SK-N-SH (cell line): ENCODE measurements at regions of chr17 and their contacts with region 1.

Region 1: GRCh38 chr17:28494445-28495188 is 11.5 kb upstream of the FOXN1 start:
- DNase-seq: peak; percentile 93
- H3K4me3 ChIP-seq: no peak overlapping the region
- H3K27ac ChIP-seq: no peak overlapping the region
- H3K4me1 ChIP-seq: peaks cover 0 to 2% of the 10 kb centered on the region in 2 experiments; a peak in 1 of 4 replicates
- H3K27me3 ChIP-seq: 0 out of 2 replicates have a peak, but pooled peaks cover 7% of the 10 kb centered on the region
- CTCF ChIP-seq: peak; percentile 86
- EP300 ChIP-seq: no peak
- RAD21 ChIP-seq: peak; percentile 93

Region 2: DNA sequence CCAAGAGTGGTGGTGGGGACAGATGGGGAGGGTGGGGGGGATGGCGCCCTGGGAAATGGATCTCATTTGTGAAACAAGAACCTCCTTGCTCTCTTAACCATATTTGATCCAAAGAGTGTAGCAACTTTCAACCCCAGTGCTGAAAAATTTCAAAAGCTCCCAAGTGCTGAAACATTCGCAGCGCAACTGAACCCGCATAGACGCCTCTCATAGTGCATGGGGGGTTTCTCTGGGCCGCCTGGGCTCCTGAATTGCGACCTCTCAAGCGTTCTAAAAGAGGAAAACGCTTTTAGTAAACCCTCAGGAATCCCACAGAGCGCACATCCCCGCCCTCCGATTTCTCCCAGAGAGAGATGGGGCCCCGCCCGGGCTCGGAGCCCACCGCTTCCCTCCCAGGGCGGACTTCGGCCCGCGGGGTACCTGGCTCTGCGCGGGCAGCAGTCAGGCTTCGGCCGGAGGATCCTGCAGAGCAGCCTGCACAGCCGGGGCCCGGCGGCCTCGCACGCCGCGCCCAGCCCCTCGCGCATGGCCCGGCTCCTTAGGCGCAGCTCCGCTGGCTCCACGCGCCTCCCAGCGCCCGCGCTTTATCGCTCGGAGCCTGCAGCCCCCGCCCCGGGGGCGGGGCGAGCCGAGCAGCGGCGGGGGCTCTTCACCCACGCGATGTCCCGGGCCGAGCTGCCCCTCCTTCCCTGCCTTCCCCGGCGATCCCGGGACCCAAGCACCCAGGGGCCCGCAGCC is 701.3 kb before region 1 on chr17:
- CTCF ChIA-PET with region 1: no interaction called
- POLR2A ChIA-PET with region 1: no interaction called
- DNase-seq: peak; percentile 90
- H3K4me3 ChIP-seq: peak overlapping the region; percentile 37 to 43
- H3K27ac ChIP-seq: no peak overlapping the region
- H3K4me1 ChIP-seq: peaks cover 0 to 3% of the 10 kb centered on the region in 2 experiments; a peak in 1 of 4 replicates
- H3K27me3 ChIP-seq: peaks cover 7% of the 10 kb centered on the region
- CTCF ChIP-seq: no peak
- EP300 ChIP-seq: no peak
- RAD21 ChIP-seq: no peak

Region 3: DNA sequence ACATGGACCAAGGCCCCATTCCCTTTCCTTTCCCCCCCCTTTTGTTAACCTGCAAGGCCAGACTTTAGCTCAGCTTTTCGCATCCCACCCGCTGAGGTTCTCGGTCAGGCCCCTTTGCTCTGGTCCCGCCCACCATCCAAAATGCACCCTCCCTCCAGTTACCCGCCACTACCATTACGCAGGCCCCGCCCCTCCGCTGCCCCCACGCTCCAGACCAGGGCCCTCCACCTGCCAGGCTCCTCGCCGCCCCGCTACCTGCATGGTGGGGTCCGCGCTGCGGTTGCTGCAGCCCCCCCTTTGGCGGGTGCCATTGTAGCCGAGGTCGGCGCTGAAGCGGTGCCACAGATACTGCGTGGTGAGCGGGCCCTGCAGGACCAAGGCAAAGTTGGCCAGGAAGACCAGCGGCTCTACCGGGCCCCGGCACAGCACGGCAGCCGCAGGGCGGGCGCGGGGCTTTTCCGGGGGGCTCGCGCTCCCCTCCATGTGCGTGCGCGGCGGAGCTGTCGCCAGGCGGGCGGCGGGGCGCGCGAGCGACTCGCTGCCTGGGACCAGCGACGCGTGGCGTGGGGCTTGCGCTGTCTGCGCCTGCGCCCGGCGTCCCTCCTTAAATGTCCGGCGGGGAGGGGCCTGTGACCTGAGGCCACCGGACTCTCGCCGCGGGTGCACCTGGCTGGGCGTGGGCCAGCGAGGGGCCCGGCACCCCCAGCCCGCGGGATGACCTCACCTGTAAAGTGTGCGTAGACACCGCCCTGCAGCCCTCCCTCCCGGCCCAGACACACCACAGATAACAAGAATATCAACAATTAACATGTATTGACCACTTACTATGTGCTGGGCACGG is 88.8 kb before region 1 on chr17 and contains the start of gene SLC46A1:
- CTCF ChIA-PET with region 1: no interaction called
- POLR2A ChIA-PET with region 1: no interaction called
- DNase-seq: peak; percentile 91
- H3K4me3 ChIP-seq: peak within 1 kb of the TSS; percentile 60 to 88
- H3K27ac ChIP-seq: peak within 1 kb of the TSS; percentile 16 to 56; a peak in 3 of 4 replicates
- H3K4me1 ChIP-seq: peaks cover 10 to 16% of the 10 kb centered on the region in 2 experiments; a peak in 2 of 4 replicates
- H3K27me3 ChIP-seq: no peaks in the 10 kb centered on the region
- CTCF ChIP-seq: no peak
- EP300 ChIP-seq: no peak
- RAD21 ChIP-seq: no peak
- polyA plus RNA-seq, gene SLC46A1: 4.2 and 4.3 TPM in 2 replicates

Region 4: DNA sequence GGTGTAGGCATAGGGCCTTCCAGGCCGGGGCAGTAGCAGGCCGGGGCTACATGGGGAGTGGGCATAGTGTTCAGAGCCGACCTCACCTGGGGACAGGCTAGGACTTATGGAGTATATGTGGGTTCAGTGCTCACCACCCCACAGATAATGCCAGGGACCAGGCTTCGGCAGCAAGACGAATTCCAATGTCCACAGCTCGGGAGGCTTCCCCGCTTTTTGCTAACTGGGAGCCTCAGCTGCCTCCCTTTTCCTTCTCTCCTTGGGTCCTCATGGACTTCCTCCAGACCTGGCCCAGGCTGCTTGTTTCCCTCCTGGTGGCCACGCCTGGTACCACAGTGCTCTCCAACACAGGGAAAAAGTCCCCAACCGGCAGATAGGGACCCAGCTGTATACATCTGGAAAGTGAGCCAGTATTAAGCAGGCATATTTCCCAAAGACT is 68.5 kb before region 1 on chr17:
- CTCF ChIA-PET with region 1: no interaction called
- POLR2A ChIA-PET with region 1: no interaction called
- DNase-seq: peak; percentile 40
- H3K4me3 ChIP-seq: no peak overlapping the region
- H3K27ac ChIP-seq: no peak overlapping the region
- H3K4me1 ChIP-seq: no peaks in the 10 kb centered on the region
- H3K27me3 ChIP-seq: no peaks in the 10 kb centered on the region; the same call in 1 of the 2 replicates
- CTCF ChIP-seq: peak; percentile 42; the same call in 1 of the 2 replicates
- EP300 ChIP-seq: no peak
- RAD21 ChIP-seq: no peak

Region 5: DNA sequence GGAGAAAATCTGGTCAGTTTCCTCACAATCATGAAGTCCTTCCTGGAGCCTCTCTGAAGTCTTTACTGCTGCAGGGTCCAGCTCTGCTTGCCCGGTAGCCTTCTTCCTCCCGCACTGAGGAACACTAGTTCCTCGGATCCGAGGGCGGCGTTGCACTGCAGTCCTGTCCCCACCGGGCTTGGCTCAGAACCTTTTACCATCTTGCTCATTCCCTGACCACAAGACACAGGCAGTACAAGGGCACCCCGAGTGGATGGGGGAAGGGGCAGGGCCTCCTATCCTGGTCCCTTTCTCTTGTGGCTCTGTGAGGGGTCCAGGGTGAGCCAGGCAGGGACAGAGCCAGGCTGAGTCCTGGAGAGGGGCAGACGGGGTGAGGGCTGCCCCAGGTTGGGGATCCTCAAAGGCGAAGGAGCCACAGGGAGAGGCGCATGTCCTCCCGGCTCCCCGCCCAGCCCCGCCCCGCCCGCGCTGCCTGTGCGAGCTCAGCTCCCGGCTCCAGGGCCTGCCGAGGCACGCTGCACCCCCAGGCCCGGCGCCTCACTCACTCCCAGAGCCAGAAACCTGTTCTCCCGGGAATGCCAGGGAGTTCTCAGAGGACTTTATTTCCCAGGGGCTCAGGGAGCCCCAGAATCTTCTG is 13.1 kb after region 1 on chr17:
- CTCF ChIA-PET with region 1: interaction called, 13 read pairs
- POLR2A ChIA-PET with region 1: no interaction called
- DNase-seq: no peak
- H3K4me3 ChIP-seq: no peak overlapping the region
- H3K27ac ChIP-seq: no peak overlapping the region
- H3K4me1 ChIP-seq: no peaks in the 10 kb centered on the region
- H3K27me3 ChIP-seq: peaks cover 26% of the 10 kb centered on the region
- CTCF ChIP-seq: no peak
- EP300 ChIP-seq: no peak
- RAD21 ChIP-seq: no peak

Region 6: DNA sequence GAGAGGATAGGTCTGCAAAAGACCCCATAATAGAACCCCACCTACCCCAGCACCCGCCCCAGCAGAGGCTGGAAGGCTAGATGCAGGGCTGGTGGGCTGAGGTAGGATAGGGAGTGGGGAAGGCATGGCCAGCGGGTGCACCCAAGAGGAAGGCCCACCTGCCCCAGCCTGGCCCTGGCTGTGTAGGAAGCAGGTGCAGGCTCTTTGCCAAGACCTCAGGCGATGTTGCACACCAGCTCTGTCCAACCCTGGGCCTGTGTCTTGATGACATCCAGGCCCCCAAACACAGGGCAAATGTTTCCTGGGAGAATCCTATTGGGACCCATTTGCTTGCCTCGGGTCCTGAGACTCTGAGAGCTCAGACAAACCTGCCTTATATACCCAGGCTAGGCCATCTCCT is 45.6 kb after region 1 on chr17:
- CTCF ChIA-PET with region 1: interaction called, 117 read pairs
- POLR2A ChIA-PET with region 1: no interaction called
- DNase-seq: peak; percentile 21
- H3K4me3 ChIP-seq: no peak overlapping the region
- H3K27ac ChIP-seq: no peak overlapping the region
- H3K4me1 ChIP-seq: no peaks in the 10 kb centered on the region
- H3K27me3 ChIP-seq: no peaks in the 10 kb centered on the region
- CTCF ChIP-seq: no peak
- EP300 ChIP-seq: no peak
- RAD21 ChIP-seq: no peak

Region 7: DNA sequence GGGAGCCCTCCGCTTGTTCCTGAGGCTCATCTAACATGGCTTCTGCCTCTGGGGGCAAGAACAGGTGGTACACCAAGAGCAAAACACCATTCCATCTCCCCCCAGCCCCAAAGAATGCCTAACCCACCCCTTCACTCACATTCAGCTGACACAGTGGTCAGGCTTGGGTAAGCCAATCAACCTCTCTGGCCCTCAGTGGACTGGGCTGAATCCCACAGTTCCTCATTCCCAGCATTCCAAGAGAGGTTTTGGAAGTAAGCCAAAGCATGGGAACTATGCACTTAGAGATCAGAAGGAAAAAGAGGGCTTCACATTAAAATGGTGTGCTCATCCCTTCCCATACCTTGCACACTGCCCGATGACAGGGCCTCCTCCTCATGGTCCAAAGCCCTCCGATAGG is 68.9 kb after region 1 on chr17:
- CTCF ChIA-PET with region 1: no interaction called
- POLR2A ChIA-PET with region 1: no interaction called
- DNase-seq: no peak
- H3K4me3 ChIP-seq: no peak overlapping the region
- H3K27ac ChIP-seq: no peak overlapping the region
- H3K4me1 ChIP-seq: peaks cover 0 to 2% of the 10 kb centered on the region in 2 experiments; a peak in 1 of 4 replicates
- H3K27me3 ChIP-seq: no peaks in the 10 kb centered on the region
- CTCF ChIP-seq: no peak
- EP300 ChIP-seq: no peak
- RAD21 ChIP-seq: no peak

Region 8: GRCh38 chr17:28612936-28613872 is 118.6 kb after region 1 on chr17:
- CTCF ChIA-PET with region 1: interaction called, 57 read pairs
- POLR2A ChIA-PET with region 1: interaction called, 3 read pairs
- DNase-seq: peak; percentile 70
- H3K4me3 ChIP-seq: no peak overlapping the region
- H3K27ac ChIP-seq: no peak overlapping the region
- H3K4me1 ChIP-seq: no peaks in the 10 kb centered on the region
- H3K27me3 ChIP-seq: no peaks in the 10 kb centered on the region
- CTCF ChIP-seq: peak; percentile 72
- EP300 ChIP-seq: no peak
- RAD21 ChIP-seq: peak; percentile 75